Heart right ventricle (tissue), 16 donors: ENCODE measurements at regions of chr13 and their contacts with region 1.

Region 1: DNA sequence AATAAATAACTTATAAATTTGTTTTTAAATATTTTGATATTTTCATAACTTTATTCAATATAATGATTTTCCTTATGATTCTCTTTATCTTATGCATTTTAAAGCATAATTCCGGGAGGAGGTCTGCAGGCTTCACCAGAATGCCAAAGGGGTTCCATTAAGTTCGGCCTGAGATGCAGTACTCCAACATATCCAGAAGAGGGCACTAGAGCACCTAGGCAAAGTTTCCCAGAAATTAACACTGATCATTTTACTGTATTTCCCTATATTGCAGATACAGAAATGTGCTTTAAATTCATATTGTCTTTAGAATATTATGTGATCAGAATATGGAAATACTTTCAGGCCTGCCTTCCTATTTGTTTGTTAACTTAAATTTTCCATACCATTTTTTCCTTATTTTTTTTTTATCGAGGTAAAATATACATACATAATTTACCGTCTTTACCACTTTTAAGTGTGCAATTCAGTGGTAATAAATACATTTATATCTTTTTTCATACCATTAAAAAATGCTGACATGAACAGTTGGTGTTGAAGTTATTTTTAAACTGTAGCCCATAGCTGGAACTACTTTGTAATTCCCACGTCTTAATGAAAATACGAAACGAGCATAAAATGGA is 58.9 kb upstream of the TM9SF2 start:
- DNase-seq: peak in 1 of 2 donors; percentile 38
- ATAC-seq: peak in 4 of 8 donors; percentile 46 to 58 (median 52)
- H3K4me3 ChIP-seq: no peak overlapping the region
- H3K27ac ChIP-seq: no peak overlapping the region
- H3K4me1 ChIP-seq: peaks cover 0 to 3% (median 0%) of the 10 kb centered on the region in 9 donors
- H3K27me3 ChIP-seq: peaks cover 0 to 38% (median 26%) of the 10 kb centered on the region in 7 donors
- CTCF ChIP-seq: peak; percentile 92 to 99 (median 96)

Region 2: GRCh38 chr13:99501184-99501847 is 58.9 kb after region 1 on chr13 and contains the start of gene TM9SF2:
- intact Hi-C with region 1: loop called in 6 of 10 experiments (anchors 5 kb)
- DNase-seq: peak; percentile 98 to 99
- ATAC-seq: peak; percentile 87 to 92 (median 90)
- H3K4me3 ChIP-seq: peak within 1 kb of the TSS; percentile 57 to 96 (median 88)
- H3K27ac ChIP-seq: peak within 1 kb of the TSS; percentile 59 to 95 (median 88)
- H3K4me1 ChIP-seq: peaks cover 3 to 86% (median 64%) of the 10 kb centered on the region in 9 donors
- H3K27me3 ChIP-seq: no peaks in the 10 kb centered on the region
- CTCF ChIP-seq: no peak
- total RNA-seq, gene TM9SF2: 51.7 to 78.8 (median 62.8) TPM

Region 3: DNA sequence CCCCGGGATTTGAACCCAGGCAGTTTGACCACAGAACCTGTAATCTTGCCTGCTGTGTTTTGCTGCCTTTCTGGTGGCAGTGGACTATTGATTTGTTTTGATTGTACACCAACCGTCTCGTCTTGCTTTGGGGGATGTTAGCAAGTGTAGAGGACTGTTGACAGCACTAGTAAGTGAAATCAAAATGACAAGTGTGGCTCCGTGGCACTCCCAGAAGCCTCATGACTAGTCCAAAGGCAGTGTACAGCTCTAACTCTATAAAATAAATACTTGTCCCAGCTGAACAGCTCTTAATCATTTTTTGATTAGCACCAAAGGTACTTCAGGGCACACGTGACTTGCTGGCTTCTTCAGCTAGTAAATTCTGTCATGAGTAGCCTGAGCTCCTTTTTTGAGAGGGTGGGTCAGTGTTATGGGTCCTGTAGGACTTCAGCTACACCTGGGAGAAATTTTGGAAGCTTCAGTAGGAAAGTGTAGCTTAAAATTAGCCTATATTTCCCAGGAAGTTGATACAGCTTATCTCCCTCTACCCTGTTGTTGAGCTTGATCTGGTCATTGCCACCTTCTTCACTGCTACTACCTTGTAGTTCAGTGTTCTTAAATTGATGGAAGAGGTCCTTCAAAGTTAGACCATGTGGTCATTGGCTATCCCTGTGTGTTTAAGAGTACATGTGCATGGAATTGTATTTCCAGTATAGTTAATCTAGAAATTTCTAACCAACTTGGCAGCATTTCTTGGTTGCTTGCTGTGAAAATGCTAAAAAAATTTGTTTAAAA is 74.0 kb after region 1 on chr13:
- intact Hi-C with region 1: loop called in 1 of 10 experiments (anchors 10 kb)
- DNase-seq: no peak
- ATAC-seq: peak in 3 of 8 donors; percentile 22 to 44 (median 22)
- H3K4me3 ChIP-seq: no peak overlapping the region
- H3K27ac ChIP-seq: no peak overlapping the region
- H3K4me1 ChIP-seq: peaks cover 8 to 62% (median 39%) of the 10 kb centered on the region in 9 donors
- H3K27me3 ChIP-seq: no peaks in the 10 kb centered on the region
- CTCF ChIP-seq: no peak

Region 4: DNA sequence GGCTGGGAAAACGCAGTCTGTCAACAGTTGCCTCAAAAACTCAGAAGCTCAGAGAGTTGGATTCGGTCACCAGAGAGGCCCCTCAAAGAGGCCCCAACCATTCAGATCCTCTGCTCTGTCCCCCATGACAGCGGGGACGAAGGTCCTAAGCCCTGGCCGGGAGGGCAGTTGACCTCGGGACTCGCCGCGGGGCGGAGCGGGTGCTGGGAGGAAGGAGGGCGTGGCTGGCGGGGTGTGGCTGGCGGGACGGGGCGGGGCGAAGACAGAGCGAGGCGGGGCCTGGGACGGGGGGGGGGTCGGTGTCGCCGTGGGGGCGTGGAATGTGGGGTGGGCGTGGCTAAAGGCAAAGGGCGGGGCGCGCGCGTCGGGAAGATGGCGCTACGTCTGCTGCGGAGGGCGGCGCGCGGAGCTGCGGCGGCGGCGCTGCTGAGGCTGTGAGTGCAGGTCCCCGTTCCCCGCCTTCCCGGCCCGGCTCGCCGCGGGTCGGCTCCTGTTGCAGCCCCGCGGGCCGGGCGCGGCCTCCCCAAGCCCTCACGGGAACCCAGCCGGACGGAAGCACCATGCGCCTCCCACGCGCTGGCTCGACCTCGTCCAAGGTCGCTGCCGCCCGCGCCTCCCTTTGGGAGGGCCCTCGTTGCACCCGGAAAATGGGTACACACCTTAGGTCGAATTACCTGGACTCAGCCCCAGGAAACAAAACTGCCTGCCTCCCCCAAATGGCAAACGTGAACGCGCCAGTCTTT is 164.1 kb after region 1 on chr13:
- intact Hi-C with region 1: loop called in 5 of 10 experiments (anchors 5 to 10 kb)
- DNase-seq: peak; percentile 94
- ATAC-seq: peak; percentile 97 to 99 (median 98)
- H3K4me3 ChIP-seq: peak within 1 kb of the TSS; percentile 56 to 91 (median 71)
- H3K27ac ChIP-seq: peak within 1 kb of the TSS; percentile 49 to 91 (median 84)
- H3K4me1 ChIP-seq: peaks cover 0 to 23% (median 8%) of the 10 kb centered on the region in 9 donors
- H3K27me3 ChIP-seq: no peaks in the 10 kb centered on the region
- CTCF ChIP-seq: peak in 3 of 9 donors; percentile 26 to 31 (median 30)

Region 5: GRCh38 chr13:99617474-99618255 is 175.3 kb after region 1 on chr13:
- intact Hi-C with region 1: loop called in 4 of 10 experiments (anchors 5 to 10 kb)
- DNase-seq: peak; percentile 23 to 38
- ATAC-seq: peak in 7 of 8 donors; percentile 57 to 73 (median 65)
- H3K4me3 ChIP-seq: no peak overlapping the region
- H3K27ac ChIP-seq: no peak overlapping the region
- H3K4me1 ChIP-seq: peaks cover 0 to 10% (median 6%) of the 10 kb centered on the region in 9 donors
- H3K27me3 ChIP-seq: no peaks in the 10 kb centered on the region
- CTCF ChIP-seq: peak; percentile 14 to 79 (median 61)